AG04450 (cell line): ENCODE measurements at regions of chr1 and their contacts with region 1.

Region 1: GRCh38 chr1:153626922-153627796 is at the start of gene S100A13:
- DNase-seq: peak; percentile 92
- H3K4me3 ChIP-seq: peak within 1 kb of the TSS; percentile 80
- H3K27ac ChIP-seq: peak within 1 kb of the TSS; percentile 92
- H3K27me3 ChIP-seq: no peaks in the 10 kb centered on the region
- CTCF ChIP-seq: peak; percentile 78
- polyA plus RNA-seq, gene S100A13: 310 and 323 TPM in 2 replicates

Region 2: GRCh38 chr1:153494976-153495535 is 132.1 kb before region 1 on chr1:
- CTCF ChIA-PET with region 1: interaction called, 10 read pairs
- POLR2A ChIA-PET with region 1: interaction called, 4 read pairs
- DNase-seq: peak; percentile 29
- H3K4me3 ChIP-seq: no peak overlapping the region
- H3K27ac ChIP-seq: no peak overlapping the region
- H3K27me3 ChIP-seq: peaks cover 10% of the 10 kb centered on the region
- CTCF ChIP-seq: peak; percentile 98

Region 3: GRCh38 chr1:153608742-153609584 is 18.2 kb before region 1 on chr1:
- CTCF ChIA-PET with region 1: interaction called, 80 read pairs
- POLR2A ChIA-PET with region 1: interaction called, 46 read pairs
- DNase-seq: no peak
- H3K4me3 ChIP-seq: peak overlapping the region; percentile 57
- H3K27ac ChIP-seq: peak overlapping the region; percentile 90
- H3K27me3 ChIP-seq: no peaks in the 10 kb centered on the region
- CTCF ChIP-seq: no peak

Region 4: DNA sequence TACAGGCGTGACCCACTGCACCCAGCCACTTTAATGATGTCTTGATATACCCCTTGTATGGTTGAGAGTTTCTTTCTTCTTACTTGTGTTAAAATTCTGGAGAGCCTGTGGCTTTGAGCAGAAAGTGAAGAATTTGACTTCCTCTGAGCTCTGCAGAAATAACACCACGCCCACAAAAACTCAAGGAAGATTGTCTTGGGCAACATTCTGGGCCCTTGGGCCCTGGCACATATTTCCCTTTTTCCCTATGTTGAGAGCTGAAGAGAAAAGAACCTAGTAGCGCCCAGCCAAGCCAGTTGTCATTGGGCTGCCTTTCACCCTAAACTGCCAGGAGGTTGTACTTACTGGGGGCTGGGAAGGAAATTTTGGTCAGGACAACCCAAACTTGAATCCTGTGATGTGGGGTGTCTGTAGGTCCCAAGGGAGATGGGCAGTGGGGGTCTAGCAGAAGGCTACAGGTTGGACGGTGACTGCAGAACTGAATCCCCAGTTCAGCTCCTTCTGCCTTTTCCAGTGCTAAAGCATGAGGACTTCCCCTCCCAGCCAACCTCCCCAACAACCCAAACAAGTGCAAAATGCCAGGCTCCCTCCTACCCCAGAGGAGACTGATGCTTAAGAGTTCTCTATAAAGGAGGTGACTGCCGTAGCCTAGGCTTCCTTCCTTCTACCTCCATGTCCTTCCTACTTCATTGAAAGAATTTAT is 19.7 kb after region 1 on chr1:
- CTCF ChIA-PET with region 1: interaction called, 10 read pairs
- POLR2A ChIA-PET with region 1: interaction called, 8 read pairs
- DNase-seq: no peak
- H3K4me3 ChIP-seq: no peak overlapping the region
- H3K27ac ChIP-seq: no peak overlapping the region
- H3K27me3 ChIP-seq: no peaks in the 10 kb centered on the region
- CTCF ChIP-seq: no peak

Region 5: GRCh38 chr1:153658400-153659174 is 31.4 kb after region 1 on chr1 and contains the start of gene SNAPIN:
- CTCF ChIA-PET with region 1: interaction called, 6 read pairs
- POLR2A ChIA-PET with region 1: interaction called, 13 read pairs
- DNase-seq: peak; percentile 49
- H3K4me3 ChIP-seq: peak within 1 kb of the TSS; percentile 92
- H3K27ac ChIP-seq: no peak within 1 kb of the TSS
- H3K27me3 ChIP-seq: no peaks in the 10 kb centered on the region
- CTCF ChIP-seq: no peak; the same call in 1 of the 2 replicates
- polyA plus RNA-seq, gene SNAPIN: 54.1 and 56.8 TPM in 2 replicates

Region 6: GRCh38 chr1:153717330-153717729 is 90.2 kb after region 1 on chr1:
- CTCF ChIA-PET with region 1: no interaction called
- POLR2A ChIA-PET with region 1: no interaction called
- DNase-seq: no peak
- H3K4me3 ChIP-seq: no peak overlapping the region
- H3K27ac ChIP-seq: no peak overlapping the region
- H3K27me3 ChIP-seq: no peaks in the 10 kb centered on the region
- CTCF ChIP-seq: no peak